Activated CD8-positive, alpha-beta memory T cell treated with anti-CD3 and anti-CD28 coated beads, Interleukin-2, amount 10 ng/mL, durations not matched to agents 7 days and 5 days (primary cell): ENCODE measurements at regions of chr16 and their contacts with region 1.

Region 1: GRCh38 chr16:48623304-48624016 is 13.5 kb upstream of the N4BP1 start:
- DNase-seq: peak; percentile 85
- ATAC-seq: peak; percentile 99
- H3K4me3 Mint-ChIP-seq: peak overlapping the region; percentile 70
- H3K27ac Mint-ChIP-seq: peak overlapping the region; percentile 63
- H3K4me1 Mint-ChIP-seq: peaks cover 39% of the 10 kb centered on the region
- H3K27me3 Mint-ChIP-seq: peaks cover 6% of the 10 kb centered on the region

Region 2: GRCh38 chr16:48231727-48232492 is 391.6 kb before region 1 on chr16:
- CTCF ChIA-PET with region 1: interaction called, 26 read pairs
- DNase-seq: peak; percentile 75
- ATAC-seq: peak; percentile 89
- H3K4me3 Mint-ChIP-seq: no peak overlapping the region
- H3K27ac Mint-ChIP-seq: peak overlapping the region; percentile 64
- H3K4me1 Mint-ChIP-seq: peaks cover 24% of the 10 kb centered on the region
- H3K27me3 Mint-ChIP-seq: peaks cover 3% of the 10 kb centered on the region

Region 3: GRCh38 chr16:48365581-48366164 is 257.8 kb before region 1 on chr16:
- CTCF ChIA-PET with region 1: interaction called, 23 read pairs
- DNase-seq: peak; percentile 91
- ATAC-seq: peak; percentile 99
- H3K4me3 Mint-ChIP-seq: peak overlapping the region; percentile 97
- H3K27ac Mint-ChIP-seq: peak overlapping the region; percentile 99
- H3K4me1 Mint-ChIP-seq: peaks cover 38% of the 10 kb centered on the region
- H3K27me3 Mint-ChIP-seq: no peaks in the 10 kb centered on the region

Region 4: DNA sequence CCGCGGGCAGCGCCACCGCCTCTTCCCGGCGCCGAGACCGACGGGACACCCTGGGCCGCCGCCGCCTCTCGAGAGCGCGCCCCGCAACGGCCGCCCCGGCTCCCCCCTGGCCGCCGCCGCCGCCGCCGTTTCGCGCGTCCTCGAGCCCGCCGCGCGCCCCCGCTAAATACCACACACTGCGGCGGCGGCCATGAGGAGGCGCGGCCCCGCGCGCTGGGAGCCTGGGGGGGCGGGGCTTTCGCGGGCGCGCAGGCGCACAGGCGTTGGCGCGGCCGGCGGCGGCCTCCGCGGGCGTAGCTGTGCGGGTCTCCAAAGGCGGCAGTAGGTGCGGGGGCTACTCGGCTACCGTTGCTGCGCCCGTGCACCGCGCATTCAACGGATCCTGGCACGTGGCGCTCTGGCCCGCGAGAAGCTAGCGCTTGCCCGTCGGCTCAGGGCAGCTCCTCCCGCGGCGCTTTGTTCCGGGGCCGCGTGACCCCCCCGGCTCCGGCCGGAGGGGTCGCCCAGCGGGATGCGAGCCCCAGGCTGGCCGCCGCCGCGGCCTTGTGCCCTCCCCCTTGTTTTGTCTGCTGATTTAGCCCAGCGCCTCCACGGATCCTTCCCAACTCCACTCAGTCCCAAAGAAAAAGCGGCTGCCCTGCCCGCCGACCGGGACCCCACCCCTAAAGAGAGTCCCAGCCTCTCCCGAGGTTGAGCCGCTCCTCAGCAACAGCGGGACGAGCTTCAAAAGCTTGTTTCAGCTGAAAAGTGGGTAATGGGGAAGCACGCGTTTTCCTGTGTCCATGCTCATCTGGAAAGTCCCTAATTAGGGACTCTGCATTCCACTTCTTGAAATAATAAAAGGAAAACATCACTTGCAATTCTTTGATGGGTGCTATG is 237.9 kb before region 1 on chr16 and contains the start of gene SIAH1:
- CTCF ChIA-PET with region 1: interaction called, 16 read pairs
- DNase-seq: peak; percentile 87
- ATAC-seq: peak; percentile 84
- H3K4me3 Mint-ChIP-seq: peak within 1 kb of the TSS; percentile 85
- H3K27ac Mint-ChIP-seq: peak within 1 kb of the TSS; percentile 86
- H3K4me1 Mint-ChIP-seq: peaks cover 21% of the 10 kb centered on the region
- H3K27me3 Mint-ChIP-seq: no peaks in the 10 kb centered on the region
- total RNA-seq, gene SIAH1: 15.5 to 17.6 TPM

Region 5: GRCh38 chr16:48542020-48542473 is 81.4 kb before region 1 on chr16:
- CTCF ChIA-PET with region 1: interaction called, 22 read pairs
- DNase-seq: no peak
- ATAC-seq: no peak
- H3K4me3 Mint-ChIP-seq: no peak overlapping the region
- H3K27ac Mint-ChIP-seq: no peak overlapping the region
- H3K4me1 Mint-ChIP-seq: peaks cover 19% of the 10 kb centered on the region
- H3K27me3 Mint-ChIP-seq: no peaks in the 10 kb centered on the region

Region 6: GRCh38 chr16:48574763-48575162 is 48.7 kb before region 1 on chr16:
- CTCF ChIA-PET with region 1: interaction called, 10 read pairs
- DNase-seq: no peak
- ATAC-seq: no peak
- H3K4me3 Mint-ChIP-seq: no peak overlapping the region
- H3K27ac Mint-ChIP-seq: no peak overlapping the region
- H3K4me1 Mint-ChIP-seq: peaks cover 58% of the 10 kb centered on the region
- H3K27me3 Mint-ChIP-seq: no peaks in the 10 kb centered on the region

Region 7: DNA sequence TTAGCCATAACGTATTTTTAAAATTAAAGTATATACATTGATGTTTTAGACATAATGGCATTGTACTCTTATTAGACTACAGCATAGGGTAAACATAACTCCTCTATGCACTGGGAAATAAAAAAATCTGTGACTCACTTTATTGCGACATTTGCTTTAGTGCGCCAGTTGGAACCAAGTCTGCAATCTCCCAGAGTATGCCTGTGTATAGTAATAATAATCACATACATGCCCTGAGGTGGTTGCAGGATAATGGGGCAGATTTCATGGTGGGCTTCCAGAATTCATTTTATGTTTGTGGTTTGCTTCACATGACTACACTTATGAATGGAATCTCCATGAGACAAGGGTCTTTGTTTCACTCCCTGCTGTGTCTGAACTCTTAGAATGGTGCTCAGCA is 53.4 kb after region 1 on chr16:
- CTCF ChIA-PET with region 1: no interaction called
- DNase-seq: no peak
- ATAC-seq: no peak
- H3K4me3 Mint-ChIP-seq: no peak overlapping the region
- H3K27ac Mint-ChIP-seq: no peak overlapping the region
- H3K4me1 Mint-ChIP-seq: no peaks in the 10 kb centered on the region
- H3K27me3 Mint-ChIP-seq: peaks cover 3% of the 10 kb centered on the region